Esophagus squamous epithelium (tissue), 5 donors: ENCODE measurements at regions of chr1 and their contacts with region 1.

Region 1: DNA sequence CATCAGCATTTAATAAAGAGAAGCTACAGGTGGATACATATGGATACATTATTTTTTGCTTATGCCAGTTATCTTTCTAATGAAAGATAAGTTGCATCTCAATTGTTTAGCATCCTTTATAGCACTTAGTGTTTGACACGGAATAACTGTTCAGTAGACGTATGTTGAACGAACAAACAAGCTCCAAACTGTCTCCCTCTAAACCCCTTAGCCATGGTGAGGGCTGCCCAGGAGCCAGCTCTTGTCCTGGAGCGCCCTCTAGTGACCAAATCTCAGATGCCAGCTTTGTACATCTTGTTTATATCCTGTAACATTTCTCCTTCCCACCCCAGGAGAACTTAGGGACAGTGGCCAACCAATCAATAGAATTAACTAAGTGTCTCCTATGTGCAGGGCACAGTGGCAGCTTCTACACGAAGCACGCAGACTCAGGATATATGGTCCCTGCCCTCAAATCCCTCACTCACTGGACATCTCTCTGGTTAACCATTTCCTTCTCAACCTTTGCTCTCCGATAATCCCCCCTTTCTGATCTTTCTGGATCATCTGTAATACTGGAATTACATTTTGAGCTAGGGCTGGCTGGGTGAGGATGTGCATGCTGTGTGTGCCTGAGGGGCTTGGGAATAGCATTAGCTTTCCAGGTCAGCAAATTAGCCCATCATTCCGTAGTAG is 22.9 kb downstream of the KCNA10 start:
- DNase-seq: no peak
- H3K4me3 ChIP-seq: no peak overlapping the region
- H3K27ac ChIP-seq: no peak overlapping the region
- H3K4me1 ChIP-seq: peaks cover 7 to 22% (median 11%) of the 10 kb centered on the region in 3 donors
- H3K27me3 ChIP-seq: no peaks in the 10 kb centered on the region
- CTCF ChIP-seq: peak; percentile 60 to 96 (median 89)
- POLR2A ChIP-seq: no peak

Region 2: DNA sequence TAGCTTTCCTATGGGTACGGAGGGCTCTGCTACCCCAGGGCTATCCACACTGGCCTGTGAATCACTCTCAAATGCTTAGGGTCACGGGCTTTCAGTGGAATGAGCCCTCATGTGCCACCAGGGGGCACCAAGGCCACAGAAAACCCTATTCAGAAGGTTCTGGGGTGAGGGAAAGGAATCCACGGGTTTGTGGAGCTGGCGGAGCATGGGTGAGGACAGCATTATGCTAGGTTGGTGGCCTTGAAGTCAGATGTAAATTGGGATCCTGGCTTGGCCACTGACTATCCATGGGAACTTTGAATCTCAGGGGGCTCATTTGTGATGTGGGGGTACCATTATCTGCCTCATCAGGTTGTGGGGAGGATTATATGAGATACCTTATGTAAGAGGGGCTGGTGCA is 83.5 kb before region 1 on chr1:
- intact Hi-C with region 1: loop called (anchors 2 kb)
- DNase-seq: no peak
- H3K4me3 ChIP-seq: no peak overlapping the region
- H3K27ac ChIP-seq: no peak overlapping the region
- H3K4me1 ChIP-seq: peaks cover 0 to 11% (median 5%) of the 10 kb centered on the region in 3 donors
- H3K27me3 ChIP-seq: no peaks in the 10 kb centered on the region
- CTCF ChIP-seq: peak in 5 of 6 experiments; percentile 70 to 85 (median 78)
- POLR2A ChIP-seq: no peak